ENCODE measurements at regions of chr7 and their contacts with region 1.

Region 1: GRCh38 chr7:69739931-69740431 is 141.7 kb downstream of the AUTS2 start:
- DNase-seq: peak in 4 of 5 donors; percentile 59 to 81 (median 72)
- ATAC-seq: peak; percentile 94 to 99 (median 98)
- H3K4me3 ChIP-seq: no peak overlapping the region
- H3K27ac ChIP-seq: peak overlapping the region in 2 of 12 donors; percentile 28 to 33
- H3K4me1 ChIP-seq: peaks cover 0 to 28% (median 21%) of the 10 kb centered on the region in 12 donors
- H3K27me3 ChIP-seq: no peaks in the 10 kb centered on the region
- CTCF ChIP-seq: no peak
- POLR2A ChIP-seq: no peak

Region 2: DNA sequence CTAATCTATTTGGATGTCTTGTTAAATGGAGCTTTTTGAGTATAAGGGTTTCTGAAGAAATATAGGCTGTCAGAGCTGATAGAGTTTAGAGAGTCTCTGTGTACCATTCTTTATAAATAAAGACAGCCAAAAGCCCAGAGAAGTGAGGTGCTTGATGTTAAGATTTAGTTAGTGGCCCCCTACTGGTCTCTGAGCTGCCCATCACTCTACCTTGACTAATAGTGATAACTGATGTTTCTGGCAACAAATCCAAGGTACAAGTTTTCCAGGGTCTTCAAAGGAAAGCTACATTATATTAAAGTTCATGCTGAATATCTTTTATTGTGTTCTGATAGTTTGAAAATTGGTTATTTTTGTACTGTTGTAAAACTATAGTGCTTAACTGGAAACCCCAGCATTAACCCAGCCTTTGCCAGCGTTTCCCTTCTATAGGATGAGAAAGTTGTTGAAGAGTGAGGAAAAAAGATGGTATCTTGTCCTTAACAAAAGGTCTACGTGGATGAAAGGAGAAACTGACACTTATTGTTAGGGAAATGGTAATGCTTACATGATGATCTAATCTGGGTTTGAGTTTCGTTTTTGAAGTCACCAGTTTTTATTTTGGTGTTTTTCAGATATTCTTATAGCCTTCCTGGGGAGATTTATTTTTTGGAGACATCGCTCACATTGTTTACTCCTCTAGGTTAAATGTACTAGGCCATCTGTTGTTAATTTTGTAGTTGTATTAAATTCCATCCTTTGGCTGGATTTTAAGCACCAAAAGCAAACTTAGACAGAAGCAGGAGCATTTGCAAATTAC is 62.7 kb before region 1 on chr7:
- intact Hi-C with region 1: loop called in 1 of 10 experiments (anchors 10 kb)
- DNase-seq: no peak
- ATAC-seq: no peak
- H3K4me3 ChIP-seq: no peak overlapping the region
- H3K27ac ChIP-seq: peak overlapping the region in 3 of 12 donors; percentile 6 to 28 (median 21)
- H3K4me1 ChIP-seq: peaks cover 0 to 34% (median 8%) of the 10 kb centered on the region in 12 donors
- H3K27me3 ChIP-seq: no peaks in the 10 kb centered on the region
- CTCF ChIP-seq: peak in 9 of 12 donors; percentile 8 to 47 (median 21)
- POLR2A ChIP-seq: no peak

Region 3: GRCh38 chr7:70271617-70272081 is 531.7 kb after region 1 on chr7:
- intact Hi-C with region 1: no loop called
- DNase-seq: no peak
- ATAC-seq: no peak
- H3K4me3 ChIP-seq: no peak overlapping the region
- H3K27ac ChIP-seq: no peak overlapping the region
- H3K4me1 ChIP-seq: no peaks in the 10 kb centered on the region
- H3K27me3 ChIP-seq: no peaks in the 10 kb centered on the region
- CTCF ChIP-seq: no peak
- POLR2A ChIP-seq: no peak

Measured in heart left ventricle (tissue), 16 donors.